ENCODE measurements at regions of chr3 and their contacts with region 1.

Region 1: GRCh38 chr3:196568246-196569002 is at the starts of genes FBXO45 and WDR53:
- DNase-seq: peak; percentile 95 to 97 (median 96)
- H3K4me3 ChIP-seq: peak within 1 kb of the TSS; percentile 75 to 97
- H3K4me3 Mint-ChIP-seq: peak within 1 kb of the TSS; percentile 95 to 99 (median 98)
- H3K27ac ChIP-seq: peak within 1 kb of the TSS; percentile 84
- H3K27ac Mint-ChIP-seq: peak within 1 kb of the TSS; percentile 97 to 99 (median 99)
- H3K4me1 ChIP-seq: peaks cover 60% of the 10 kb centered on the region
- H3K4me1 Mint-ChIP-seq: peaks cover 31 to 52% (median 42%) of the 10 kb centered on the region in 4 donors
- H3K27me3 ChIP-seq: no peaks in the 10 kb centered on the region
- H3K27me3 Mint-ChIP-seq: no peaks in the 10 kb centered on the region
- total RNA-seq, gene FBXO45: 10.9 to 12.0 TPM
- total RNA-seq, gene WDR53: 37.5 to 38.7 TPM

Region 2: DNA sequence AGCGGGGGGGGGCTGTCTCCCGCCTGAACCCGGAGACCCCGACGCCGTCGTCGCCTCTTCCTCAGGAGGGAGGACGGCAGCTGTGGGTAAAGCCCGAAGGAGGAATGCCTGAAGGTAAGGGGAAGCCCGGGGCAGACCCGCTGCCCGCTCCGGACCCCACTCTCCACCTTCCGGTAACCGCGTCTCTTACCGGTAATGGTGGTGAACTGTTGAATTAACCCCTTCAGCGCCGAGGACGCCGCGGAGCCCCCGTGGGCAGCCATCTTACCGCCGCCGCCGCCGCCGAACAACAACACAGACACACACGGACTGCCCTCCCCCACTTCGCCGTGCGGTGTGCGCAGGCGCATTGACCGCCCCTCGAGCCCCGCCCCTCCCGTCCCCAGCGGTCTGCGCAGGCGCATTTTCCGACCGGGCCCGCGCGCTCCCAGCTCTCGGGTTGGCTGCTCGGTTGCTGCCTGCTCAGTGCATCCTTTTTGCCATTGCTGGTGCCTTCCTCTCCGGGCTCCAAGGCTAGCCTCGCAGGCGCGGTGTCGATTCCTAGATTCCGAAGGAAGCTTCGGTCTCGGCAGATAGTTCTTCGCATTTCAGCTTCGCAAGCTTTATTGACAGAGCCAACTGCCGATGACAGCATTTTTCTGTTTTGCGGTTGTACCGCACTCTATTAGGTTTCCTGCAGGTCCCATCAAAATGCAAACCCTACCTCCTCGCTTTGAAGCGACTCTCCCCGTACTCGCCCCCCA is 136.1 kb before region 1 on chr3 and contains the start of gene UBXN7:
- CTCF ChIA-PET with region 1: interaction called, 3 read pairs
- POLR2A ChIA-PET with region 1: interaction called, 8 read pairs
- intact Hi-C with region 1: loop called (anchors 1 kb)
- DNase-seq: peak; percentile 92 to 96 (median 95)
- H3K4me3 ChIP-seq: peak within 1 kb of the TSS; percentile 64 to 95
- H3K4me3 Mint-ChIP-seq: peak within 1 kb of the TSS; percentile 70 to 97 (median 85)
- H3K27ac ChIP-seq: peak within 1 kb of the TSS; percentile 81
- H3K27ac Mint-ChIP-seq: peak within 1 kb of the TSS; percentile 80 to 97 (median 96)
- H3K4me1 ChIP-seq: peaks cover 22% of the 10 kb centered on the region
- H3K4me1 Mint-ChIP-seq: peaks cover 8 to 35% (median 15%) of the 10 kb centered on the region in 4 donors
- H3K27me3 ChIP-seq: no peaks in the 10 kb centered on the region
- H3K27me3 Mint-ChIP-seq: no peaks in the 10 kb centered on the region
- total RNA-seq, gene UBXN7: 72.6 to 90.8 TPM

Region 3: GRCh38 chr3:196528639-196529233 is 39.7 kb before region 1 on chr3:
- CTCF ChIA-PET with region 1: interaction called, 10 read pairs
- POLR2A ChIA-PET with region 1: interaction called, 12 read pairs
- intact Hi-C with region 1: loop called (anchors 1 kb)
- DNase-seq: peak; percentile 59 to 78 (median 66)
- H3K4me3 ChIP-seq: peak overlapping the region; percentile 47 to 60
- H3K4me3 Mint-ChIP-seq: peak overlapping the region; percentile 42 to 84 (median 70)
- H3K27ac ChIP-seq: no peak overlapping the region
- H3K27ac Mint-ChIP-seq: peak overlapping the region in 5 of 7 donors; percentile 23 to 85 (median 46)
- H3K4me1 ChIP-seq: no peaks in the 10 kb centered on the region
- H3K4me1 Mint-ChIP-seq: peaks cover 0 to 5% (median 5%) of the 10 kb centered on the region in 4 donors
- H3K27me3 ChIP-seq: no peaks in the 10 kb centered on the region
- H3K27me3 Mint-ChIP-seq: peaks cover 0 to 5% of the 10 kb centered on the region in 2 donors

Region 4: GRCh38 chr3:196632046-196632751 is 63.8 kb after region 1 on chr3:
- CTCF ChIA-PET with region 1: no interaction called
- POLR2A ChIA-PET with region 1: interaction called, 14 read pairs
- intact Hi-C with region 1: loop called (anchors 1 kb)
- DNase-seq: peak; percentile 91 to 94 (median 92)
- H3K4me3 ChIP-seq: peak overlapping the region; percentile 24 to 77
- H3K4me3 Mint-ChIP-seq: peak overlapping the region; percentile 80 to 93 (median 86)
- H3K27ac ChIP-seq: peak overlapping the region; percentile 69
- H3K27ac Mint-ChIP-seq: peak overlapping the region; percentile 94 to 98 (median 96)
- H3K4me1 ChIP-seq: peaks cover 57% of the 10 kb centered on the region
- H3K4me1 Mint-ChIP-seq: peaks cover 34 to 70% (median 52%) of the 10 kb centered on the region in 4 donors
- H3K27me3 ChIP-seq: no peaks in the 10 kb centered on the region
- H3K27me3 Mint-ChIP-seq: no peaks in the 10 kb centered on the region

Region 5: DNA sequence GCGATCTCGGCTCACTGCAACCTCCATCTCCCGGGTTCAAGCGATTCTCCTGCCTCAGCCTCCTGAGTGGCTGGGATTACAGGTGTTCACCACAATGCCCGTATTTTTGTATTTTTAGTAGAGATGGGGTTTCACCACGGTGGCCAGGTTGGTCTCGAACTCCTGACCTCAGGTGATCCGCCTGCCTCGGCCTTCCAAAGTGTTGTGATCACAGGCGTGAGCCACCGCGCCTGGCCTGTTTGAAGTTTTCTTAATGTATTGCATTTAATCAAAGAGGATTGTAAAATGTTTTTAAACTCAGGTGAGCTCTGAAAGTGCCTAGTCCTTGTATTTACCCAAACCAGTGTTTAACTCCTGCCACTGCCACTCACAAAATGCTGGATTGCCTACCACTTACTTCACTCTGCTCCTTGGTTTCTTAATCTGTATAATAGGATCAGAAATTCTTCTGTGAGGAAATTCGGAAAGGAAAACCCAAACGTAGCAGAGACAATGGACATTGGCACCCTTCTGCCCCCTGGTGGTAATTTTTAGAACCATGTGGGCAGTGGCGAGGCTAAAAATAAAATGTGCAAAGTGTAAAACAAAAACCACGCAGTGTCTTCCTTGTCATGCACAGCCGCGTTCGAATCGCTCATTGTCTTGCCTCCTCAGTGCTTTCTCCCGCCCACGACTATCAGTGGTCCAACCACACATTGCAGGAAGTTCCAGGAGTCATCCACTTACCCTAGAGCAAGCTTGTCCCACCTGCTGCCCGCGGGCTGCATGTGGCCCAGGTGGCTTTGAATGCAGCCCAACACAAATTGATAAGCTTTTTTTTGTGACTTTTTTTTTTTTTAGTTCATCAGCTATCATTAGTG is 116.4 kb after region 1 on chr3:
- CTCF ChIA-PET with region 1: interaction called, 3 read pairs
- POLR2A ChIA-PET with region 1: interaction called, 4 read pairs
- intact Hi-C with region 1: loop called (anchors 1 kb)
- DNase-seq: peak; percentile 61 to 75 (median 65)
- H3K4me3 ChIP-seq: peak overlapping the region in 1 of 2 donors; percentile 40
- H3K4me3 Mint-ChIP-seq: peak overlapping the region; percentile 39 to 80 (median 70)
- H3K27ac ChIP-seq: no peak overlapping the region
- H3K27ac Mint-ChIP-seq: peak overlapping the region in 5 of 7 donors; percentile 19 to 81 (median 64)
- H3K4me1 ChIP-seq: peaks cover 11% of the 10 kb centered on the region
- H3K4me1 Mint-ChIP-seq: peaks cover 10 to 16% (median 14%) of the 10 kb centered on the region in 4 donors
- H3K27me3 ChIP-seq: no peaks in the 10 kb centered on the region
- H3K27me3 Mint-ChIP-seq: no peaks in the 10 kb centered on the region

Region 6: GRCh38 chr3:196942226-196942914 is 373.9 kb after region 1 on chr3 and contains the start of gene NCBP2:
- CTCF ChIA-PET with region 1: no interaction called
- POLR2A ChIA-PET with region 1: interaction called, 12 read pairs
- intact Hi-C with region 1: loop called (anchors 1 kb)
- DNase-seq: peak; percentile 99
- H3K4me3 ChIP-seq: peak within 1 kb of the TSS; percentile 98 to 99
- H3K4me3 Mint-ChIP-seq: peak within 1 kb of the TSS; percentile 94 to 97 (median 96)
- H3K27ac ChIP-seq: peak within 1 kb of the TSS; percentile 93
- H3K27ac Mint-ChIP-seq: peak within 1 kb of the TSS; percentile 97 to 99 (median 98)
- H3K4me1 ChIP-seq: peaks cover 29% of the 10 kb centered on the region
- H3K4me1 Mint-ChIP-seq: peaks cover 15 to 61% (median 44%) of the 10 kb centered on the region in 4 donors
- H3K27me3 ChIP-seq: no peaks in the 10 kb centered on the region
- H3K27me3 Mint-ChIP-seq: no peaks in the 10 kb centered on the region
- total RNA-seq, gene NCBP2: 71.4 to 73.7 TPM

Measured in CD4-positive, alpha-beta memory T cell (primary cell).